Activated T-helper 2 cell treated with anti-CD3 and anti-CD28 coated beads, Interferon-gamma antibody, Interleukin-2, Interleukin-4, amounts not matched to agents 10 μg/mL and 5 μg/mL and 100 μg/mL, durations not matched to agents 14 hours and 24 hours and 36 hours (primary cell): ENCODE measurements at regions of chr3 and their contacts with region 1.

Region 1: GRCh38 chr3:195129644-195130492 is 141.1 kb downstream of the XXYLT1 start:
- DNase-seq: no peak
- H3K4me3 Mint-ChIP-seq: no peak overlapping the region
- H3K27ac Mint-ChIP-seq: peak overlapping the region; percentile 89
- H3K4me1 Mint-ChIP-seq: peaks cover 26% of the 10 kb centered on the region
- H3K27me3 Mint-ChIP-seq: no peaks in the 10 kb centered on the region

Region 2: DNA sequence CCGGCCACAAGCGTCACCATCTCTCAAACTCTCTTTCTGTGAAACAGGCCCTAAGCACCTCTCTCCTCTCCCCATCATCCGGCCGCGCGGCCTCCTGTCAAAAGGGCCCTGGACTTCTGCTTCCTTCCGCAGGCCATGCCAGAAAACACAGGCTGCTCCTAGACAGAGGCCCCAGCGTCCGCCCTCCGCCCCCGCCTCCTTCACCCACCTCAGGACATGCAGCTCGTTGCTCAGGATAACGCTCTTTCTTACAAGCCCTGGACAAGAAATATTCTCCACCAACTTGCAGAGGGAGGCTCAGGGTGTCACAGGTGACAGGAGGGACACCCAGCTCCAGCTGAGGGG is 70.9 kb before region 1 on chr3:
- intact Hi-C with region 1: no loop called
- DNase-seq: no peak
- H3K4me3 Mint-ChIP-seq: no peak overlapping the region
- H3K27ac Mint-ChIP-seq: no peak overlapping the region
- H3K4me1 Mint-ChIP-seq: no peaks in the 10 kb centered on the region
- H3K27me3 Mint-ChIP-seq: no peaks in the 10 kb centered on the region

Region 3: DNA sequence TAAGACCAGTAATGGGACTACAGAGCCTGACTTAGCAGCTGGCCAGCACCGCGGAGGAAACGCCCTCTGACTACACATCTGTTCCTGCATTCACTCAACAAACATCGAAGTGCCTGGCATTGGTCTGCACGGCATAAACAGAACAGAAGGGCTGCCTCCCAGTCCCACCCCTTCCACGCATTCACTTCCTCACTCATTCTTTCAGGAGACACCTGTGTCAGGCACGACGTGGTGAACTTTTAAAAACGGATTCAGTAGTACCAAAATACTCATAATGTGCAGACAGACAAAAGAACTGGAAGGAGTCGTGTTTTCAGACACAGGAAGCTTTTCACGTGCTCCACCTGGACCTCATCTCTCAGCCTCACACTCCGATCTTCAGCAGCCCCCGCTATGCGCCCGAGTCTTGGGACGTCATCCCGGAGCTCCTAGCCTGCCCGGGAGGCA is 17.8 kb after region 1 on chr3:
- intact Hi-C with region 1: loop called (anchors 1 kb)
- DNase-seq: peak; percentile 48
- H3K4me3 Mint-ChIP-seq: peak overlapping the region; percentile 78
- H3K27ac Mint-ChIP-seq: peak overlapping the region; percentile 74
- H3K4me1 Mint-ChIP-seq: peaks cover 37% of the 10 kb centered on the region
- H3K27me3 Mint-ChIP-seq: no peaks in the 10 kb centered on the region

Region 4: DNA sequence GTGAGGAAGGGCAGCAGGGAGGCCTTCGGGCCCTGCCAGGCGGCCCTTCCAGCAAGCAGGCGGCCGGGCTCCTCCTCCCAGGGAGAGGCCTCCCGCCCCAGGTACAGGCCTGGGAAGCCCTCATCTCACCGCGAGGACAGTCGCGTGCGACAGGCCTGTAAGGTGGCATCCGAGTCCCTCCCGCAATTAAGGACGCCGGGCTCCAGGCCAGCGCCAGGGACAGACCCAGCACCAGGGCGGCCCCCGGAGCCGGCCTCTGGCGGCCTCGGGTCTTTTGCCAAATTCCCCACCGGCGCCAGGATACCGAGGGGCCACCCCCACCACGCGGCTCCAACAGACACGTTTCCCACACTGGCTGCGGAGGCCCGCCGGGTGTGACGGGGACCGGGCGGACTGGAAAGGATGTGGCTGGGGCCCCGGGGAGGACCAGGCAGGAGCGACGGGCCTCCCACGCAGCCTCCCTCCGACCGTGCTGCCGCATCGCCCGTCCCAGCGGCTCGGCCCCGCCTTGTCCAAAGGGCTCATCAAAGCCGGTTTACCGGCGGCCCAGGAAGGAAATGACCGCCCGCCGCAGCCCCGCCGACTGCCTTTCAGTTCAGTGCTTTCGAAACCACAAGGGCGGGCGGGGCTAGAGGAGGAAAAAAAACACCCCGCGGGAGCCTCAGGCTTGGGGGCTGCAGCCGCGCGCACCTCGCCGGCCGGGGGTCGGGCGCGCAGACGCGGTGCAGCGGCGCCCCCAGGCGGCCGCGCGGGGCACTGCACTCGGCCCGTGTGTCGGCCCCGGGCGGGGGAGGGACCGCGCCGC is 129.8 kb after region 1 on chr3:
- intact Hi-C with region 1: loop called (anchors 10 kb)
- DNase-seq: peak; percentile 80
- H3K4me3 Mint-ChIP-seq: peak overlapping the region; percentile 55
- H3K27ac Mint-ChIP-seq: peak overlapping the region; percentile 38
- H3K4me1 Mint-ChIP-seq: peaks cover 29% of the 10 kb centered on the region
- H3K27me3 Mint-ChIP-seq: no peaks in the 10 kb centered on the region